Caco-2 (cell line): ENCODE measurements at regions of chr13 and their contacts with region 1.

Region 1: GRCh38 chr13:62357887-62358645 is 942.4 kb upstream of the PCDH20 start:
- DNase-seq: peak; percentile 76 to 77
- H3K4me3 ChIP-seq: no peak overlapping the region
- H3K4me3 Mint-ChIP-seq: no peak overlapping the region
- H3K27ac Mint-ChIP-seq: no peak overlapping the region
- H3K4me1 ChIP-seq: no peaks in the 10 kb centered on the region
- H3K4me1 Mint-ChIP-seq: peaks cover 4% of the 10 kb centered on the region
- H3K27me3 ChIP-seq: no peaks in the 10 kb centered on the region
- H3K27me3 Mint-ChIP-seq: no peaks in the 10 kb centered on the region
- CTCF ChIP-seq: peak; percentile 77 to 84

Region 2: GRCh38 chr13:61880578-61881283 is 477.3 kb before region 1 on chr13:
- CTCF ChIA-PET with region 1: no interaction called
- POLR2A ChIA-PET with region 1: no interaction called
- intact Hi-C with region 1: loop called (anchors 1 kb)
- DNase-seq: peak; percentile 48 to 62
- H3K4me3 ChIP-seq: no peak overlapping the region
- H3K4me3 Mint-ChIP-seq: no peak overlapping the region
- H3K27ac Mint-ChIP-seq: no peak overlapping the region
- H3K4me1 ChIP-seq: no peaks in the 10 kb centered on the region
- H3K4me1 Mint-ChIP-seq: no peaks in the 10 kb centered on the region
- H3K27me3 ChIP-seq: no peaks in the 10 kb centered on the region
- H3K27me3 Mint-ChIP-seq: peaks cover 2% of the 10 kb centered on the region
- CTCF ChIP-seq: peak; percentile 52 to 70

Region 3: GRCh38 chr13:61965756-61966155 is 392.3 kb before region 1 on chr13:
- CTCF ChIA-PET with region 1: no interaction called
- POLR2A ChIA-PET with region 1: no interaction called
- intact Hi-C with region 1: no loop called
- DNase-seq: no peak
- H3K4me3 ChIP-seq: no peak overlapping the region
- H3K4me3 Mint-ChIP-seq: no peak overlapping the region
- H3K27ac Mint-ChIP-seq: no peak overlapping the region
- H3K4me1 ChIP-seq: no peaks in the 10 kb centered on the region
- H3K4me1 Mint-ChIP-seq: no peaks in the 10 kb centered on the region
- H3K27me3 ChIP-seq: no peaks in the 10 kb centered on the region
- H3K27me3 Mint-ChIP-seq: no peaks in the 10 kb centered on the region
- CTCF ChIP-seq: no peak

Region 4: GRCh38 chr13:62014299-62014698 is 343.8 kb before region 1 on chr13:
- CTCF ChIA-PET with region 1: no interaction called
- POLR2A ChIA-PET with region 1: no interaction called
- intact Hi-C with region 1: loop called (anchors 1 kb)
- DNase-seq: peak in 1 of 2 experiments; percentile 24
- H3K4me3 ChIP-seq: no peak overlapping the region
- H3K4me3 Mint-ChIP-seq: no peak overlapping the region
- H3K27ac Mint-ChIP-seq: no peak overlapping the region
- H3K4me1 ChIP-seq: no peaks in the 10 kb centered on the region
- H3K4me1 Mint-ChIP-seq: no peaks in the 10 kb centered on the region
- H3K27me3 ChIP-seq: no peaks in the 10 kb centered on the region
- H3K27me3 Mint-ChIP-seq: no peaks in the 10 kb centered on the region
- CTCF ChIP-seq: peak; percentile 10 to 24

Region 5: DNA sequence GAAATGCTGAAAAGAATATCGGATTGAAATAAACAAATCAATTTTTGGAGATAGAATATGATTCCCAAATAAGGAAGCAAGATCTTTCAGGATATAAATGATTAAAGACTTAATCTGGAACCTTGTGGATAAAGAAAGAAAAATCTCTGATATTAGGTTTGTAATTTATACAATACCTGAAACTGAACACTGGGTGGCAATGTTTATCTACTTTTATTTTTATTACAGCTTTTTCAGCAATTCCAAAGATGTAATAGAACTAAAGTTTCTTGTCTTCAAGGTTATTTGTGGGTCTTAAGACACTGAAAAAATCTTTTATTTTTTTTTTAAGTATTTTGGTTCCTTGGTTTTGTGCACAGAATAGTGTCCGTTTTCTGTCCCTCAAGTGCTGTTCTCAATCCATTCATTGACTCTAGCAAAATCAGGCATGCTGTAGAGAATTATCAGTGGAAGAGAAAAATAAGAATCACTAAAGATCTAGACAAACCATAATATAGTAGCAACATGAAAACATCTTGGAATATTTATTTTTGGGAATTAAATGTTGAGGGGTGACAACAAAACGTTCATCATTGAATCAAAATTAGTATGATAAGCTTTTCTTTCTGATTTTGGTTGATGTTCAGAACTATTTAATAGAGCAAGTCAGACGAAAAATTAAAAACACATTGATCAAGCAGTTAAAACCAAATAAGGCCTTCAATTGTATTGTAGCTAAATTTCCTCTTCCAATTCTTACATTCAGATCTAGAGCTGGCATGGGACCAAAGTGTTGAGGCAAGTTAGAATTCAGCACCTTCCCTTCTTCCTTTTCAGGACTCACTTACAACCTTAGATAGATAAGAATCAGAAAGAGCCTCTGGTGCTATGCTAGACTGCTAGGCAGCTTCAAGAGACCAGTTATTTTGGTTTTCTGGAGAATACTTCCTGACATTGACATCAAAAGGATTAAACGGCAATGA is 238.0 kb before region 1 on chr13:
- CTCF ChIA-PET with region 1: interaction called, 5 read pairs
- POLR2A ChIA-PET with region 1: no interaction called
- intact Hi-C with region 1: loop called (anchors 1 kb)
- DNase-seq: no peak
- H3K4me3 ChIP-seq: no peak overlapping the region
- H3K4me3 Mint-ChIP-seq: no peak overlapping the region
- H3K27ac Mint-ChIP-seq: no peak overlapping the region
- H3K4me1 ChIP-seq: no peaks in the 10 kb centered on the region
- H3K4me1 Mint-ChIP-seq: no peaks in the 10 kb centered on the region
- H3K27me3 ChIP-seq: no peaks in the 10 kb centered on the region
- H3K27me3 Mint-ChIP-seq: peaks cover 5% of the 10 kb centered on the region
- CTCF ChIP-seq: peak; percentile 29 to 56

Region 6: GRCh38 chr13:62292714-62293480 is 65.2 kb before region 1 on chr13:
- CTCF ChIA-PET with region 1: no interaction called
- POLR2A ChIA-PET with region 1: no interaction called
- intact Hi-C with region 1: no loop called
- DNase-seq: no peak
- H3K4me3 ChIP-seq: no peak overlapping the region
- H3K4me3 Mint-ChIP-seq: no peak overlapping the region
- H3K27ac Mint-ChIP-seq: no peak overlapping the region
- H3K4me1 ChIP-seq: no peaks in the 10 kb centered on the region
- H3K4me1 Mint-ChIP-seq: no peaks in the 10 kb centered on the region
- H3K27me3 ChIP-seq: no peaks in the 10 kb centered on the region
- H3K27me3 Mint-ChIP-seq: no peaks in the 10 kb centered on the region
- CTCF ChIP-seq: no peak

Region 7: GRCh38 chr13:62320129-62321108 is 37.6 kb before region 1 on chr13:
- CTCF ChIA-PET with region 1: interaction called, 3 read pairs
- POLR2A ChIA-PET with region 1: no interaction called
- intact Hi-C with region 1: loop called (anchors 1 kb)
- DNase-seq: peak in 1 of 2 experiments; percentile 42
- H3K4me3 ChIP-seq: no peak overlapping the region
- H3K4me3 Mint-ChIP-seq: no peak overlapping the region
- H3K27ac Mint-ChIP-seq: no peak overlapping the region
- H3K4me1 ChIP-seq: no peaks in the 10 kb centered on the region
- H3K4me1 Mint-ChIP-seq: no peaks in the 10 kb centered on the region
- H3K27me3 ChIP-seq: no peaks in the 10 kb centered on the region
- H3K27me3 Mint-ChIP-seq: no peaks in the 10 kb centered on the region
- CTCF ChIP-seq: peak; percentile 62 to 66

Region 8: DNA sequence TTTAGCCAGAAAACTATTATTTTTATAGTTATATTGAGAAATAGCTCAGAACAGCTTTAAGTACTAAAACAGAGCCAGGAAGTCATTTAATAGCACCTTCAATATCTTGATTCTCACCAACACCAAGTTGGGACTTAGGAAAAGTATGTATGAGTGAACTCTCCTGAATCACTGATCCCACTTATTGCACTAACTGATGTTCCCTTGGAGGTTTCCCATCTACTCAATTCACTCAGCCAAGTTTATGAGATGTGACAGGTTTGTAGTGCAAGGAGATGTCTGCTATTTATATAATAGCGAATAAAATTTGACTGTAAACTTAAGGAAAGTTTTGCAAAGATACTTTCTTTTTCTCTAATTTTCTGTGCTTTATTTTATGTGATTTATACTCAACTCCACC is 205.2 kb after region 1 on chr13:
- CTCF ChIA-PET with region 1: no interaction called
- POLR2A ChIA-PET with region 1: no interaction called
- intact Hi-C with region 1: no loop called
- DNase-seq: no peak
- H3K4me3 ChIP-seq: no peak overlapping the region
- H3K4me3 Mint-ChIP-seq: no peak overlapping the region
- H3K27ac Mint-ChIP-seq: no peak overlapping the region
- H3K4me1 ChIP-seq: no peaks in the 10 kb centered on the region
- H3K4me1 Mint-ChIP-seq: no peaks in the 10 kb centered on the region
- H3K27me3 ChIP-seq: no peaks in the 10 kb centered on the region
- H3K27me3 Mint-ChIP-seq: peaks cover 5% of the 10 kb centered on the region
- CTCF ChIP-seq: no peak